ENCODE measurements at regions of chr2 and their contacts with region 1.

Region 1: GRCh38 chr2:159921752-159922404 is 123.9 kb upstream of the CD302 start:
- DNase-seq: peak; percentile 72 to 76
- ATAC-seq: peak in 7 of 8 donors; percentile 75 to 93 (median 89)
- H3K4me3 ChIP-seq: no peak overlapping the region
- H3K27ac ChIP-seq: no peak overlapping the region
- H3K4me1 ChIP-seq: peaks cover 0 to 9% (median 0%) of the 10 kb centered on the region in 9 donors
- H3K27me3 ChIP-seq: no peaks in the 10 kb centered on the region
- CTCF ChIP-seq: peak; percentile 44 to 87 (median 75)

Region 2: DNA sequence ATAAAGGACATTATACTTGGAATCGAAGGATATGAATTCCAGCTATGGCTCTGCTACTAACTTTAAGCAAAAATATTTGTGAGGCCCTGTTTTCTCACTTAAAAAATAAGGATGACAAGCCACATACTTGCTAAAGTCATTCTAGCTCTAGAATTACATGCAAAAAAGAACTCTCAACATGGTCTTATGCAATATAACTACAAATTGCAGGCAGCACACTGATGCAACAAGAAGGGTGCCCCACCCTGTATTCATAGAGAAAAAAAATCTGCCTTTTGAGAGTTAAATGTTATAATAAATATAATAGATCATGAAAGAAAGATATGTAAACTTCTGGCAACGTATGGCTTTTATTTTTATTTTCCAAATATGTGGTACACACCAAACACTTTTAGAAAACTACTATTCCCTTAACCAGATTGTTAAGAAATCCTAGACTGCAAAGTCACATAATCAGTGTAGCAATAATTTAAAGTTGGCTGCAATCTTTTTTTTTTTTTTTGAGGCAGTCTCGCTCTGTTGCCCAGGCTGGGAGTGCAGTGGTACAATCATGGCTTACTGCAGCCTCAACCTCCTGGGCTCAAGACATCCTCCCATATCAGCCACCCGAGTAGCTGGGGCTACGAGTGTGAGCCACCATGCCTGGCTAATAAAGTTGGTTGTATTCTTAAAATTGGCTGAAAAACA is 595.2 kb before region 1 on chr2:
- intact Hi-C with region 1: no loop called
- DNase-seq: no peak
- ATAC-seq: peak in 2 of 8 donors; percentile 44 to 68
- H3K4me3 ChIP-seq: no peak overlapping the region
- H3K27ac ChIP-seq: peak overlapping the region in 1 of 10 donors; percentile 54
- H3K4me1 ChIP-seq: peaks cover 0 to 10% (median 0%) of the 10 kb centered on the region in 9 donors
- H3K27me3 ChIP-seq: no peaks in the 10 kb centered on the region
- CTCF ChIP-seq: no peak

Region 3: DNA sequence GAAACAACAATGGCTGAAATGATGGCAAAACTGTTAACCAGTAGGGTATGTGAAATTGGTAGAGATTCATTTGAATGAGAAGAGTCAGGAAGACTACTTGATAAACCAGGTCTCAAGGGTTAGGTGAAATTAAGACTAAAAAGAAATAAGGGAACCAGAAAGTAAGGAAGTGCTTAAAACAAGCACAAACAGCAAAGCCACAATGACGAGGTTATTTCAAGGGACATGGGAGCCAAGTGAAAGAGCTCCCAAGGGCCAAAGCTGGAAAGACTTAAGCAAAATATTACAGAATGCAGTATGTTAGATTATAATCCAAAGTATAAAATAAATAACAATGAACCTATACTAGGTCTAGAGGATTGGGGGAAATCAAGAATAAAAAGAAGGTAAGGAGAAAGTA is 104.6 kb before region 1 on chr2:
- intact Hi-C with region 1: loop called in 1 of 10 experiments (anchors 10 kb)
- DNase-seq: no peak
- ATAC-seq: no peak
- H3K4me3 ChIP-seq: no peak overlapping the region
- H3K27ac ChIP-seq: peak overlapping the region in 1 of 10 donors; percentile 16
- H3K4me1 ChIP-seq: no peaks in the 10 kb centered on the region
- H3K27me3 ChIP-seq: no peaks in the 10 kb centered on the region
- CTCF ChIP-seq: no peak

Region 4: GRCh38 chr2:159832858-159833257 is 89.0 kb before region 1 on chr2:
- intact Hi-C with region 1: loop called in 1 of 10 experiments (anchors 10 kb)
- DNase-seq: no peak
- ATAC-seq: no peak
- H3K4me3 ChIP-seq: no peak overlapping the region
- H3K27ac ChIP-seq: no peak overlapping the region
- H3K4me1 ChIP-seq: peaks cover 0 to 4% (median 0%) of the 10 kb centered on the region in 9 donors
- H3K27me3 ChIP-seq: no peaks in the 10 kb centered on the region
- CTCF ChIP-seq: no peak

Region 5: DNA sequence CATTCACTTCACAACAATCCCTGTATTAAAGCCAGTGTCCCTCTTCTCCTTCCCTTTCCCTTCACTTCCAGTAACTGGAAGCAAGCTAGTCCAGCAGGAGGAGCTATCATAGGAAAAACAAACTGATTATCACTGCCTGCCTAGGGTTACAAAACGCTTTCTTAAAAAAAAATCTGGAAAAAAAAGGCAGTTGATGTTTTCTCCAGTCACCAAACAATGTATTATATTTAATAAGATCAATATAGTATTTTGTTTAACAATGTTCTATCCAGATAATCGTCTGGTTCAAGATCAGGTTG is 356.9 kb after region 1 on chr2:
- intact Hi-C with region 1: no loop called
- DNase-seq: peak in 1 of 2 donors; percentile 36
- ATAC-seq: peak in 6 of 8 donors; percentile 62 to 81 (median 75)
- H3K4me3 ChIP-seq: no peak overlapping the region
- H3K27ac ChIP-seq: peak overlapping the region in 8 of 10 donors; percentile 5 to 51 (median 24)
- H3K4me1 ChIP-seq: peaks cover 0 to 55% (median 23%) of the 10 kb centered on the region in 9 donors
- H3K27me3 ChIP-seq: no peaks in the 10 kb centered on the region
- CTCF ChIP-seq: peak in 8 of 9 donors; percentile 20 to 74 (median 61)

Measured in heart right ventricle (tissue), 16 donors.